ENCODE measurements at regions of chr16 and their contacts with region 1.

Region 1: DNA sequence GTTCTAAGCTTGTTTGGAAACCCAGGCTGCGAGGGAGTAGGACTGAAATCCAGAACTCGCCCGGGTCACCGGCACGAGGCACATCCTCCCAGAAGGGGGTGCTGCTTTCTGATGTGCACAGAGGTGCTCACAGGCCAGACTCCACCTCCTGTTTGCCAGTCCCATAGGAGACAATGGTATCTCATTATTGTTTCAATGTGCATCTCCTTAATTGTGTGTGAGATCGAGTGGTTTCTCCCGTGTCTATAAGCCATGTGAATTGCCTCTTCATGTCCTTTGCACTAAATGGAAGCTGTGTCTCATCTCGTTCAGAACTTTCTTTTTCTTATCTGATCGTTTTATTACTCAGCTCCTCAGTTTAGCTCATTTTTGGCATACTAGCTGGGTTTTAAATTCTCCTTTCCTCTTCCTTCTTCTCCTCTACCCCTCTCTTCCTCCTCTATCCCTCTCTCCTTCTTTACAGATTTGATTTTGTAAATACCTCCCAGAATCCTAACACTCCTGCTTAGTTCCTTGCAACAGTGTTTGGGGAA is 32.1 kb upstream of the PRKCB start:
- DNase-seq: peak; percentile 79 to 91 (median 85)
- ATAC-seq: peak; percentile 98
- H3K4me3 ChIP-seq: peak overlapping the region; percentile 9; the same call in 1 of the 2 replicates
- H3K27ac ChIP-seq: peak overlapping the region; percentile 58
- H3K4me1 ChIP-seq: peaks cover 3 to 22% of the 10 kb centered on the region in 2 experiments; a peak in 4 of 5 replicates
- H3K27me3 ChIP-seq: no peaks in the 10 kb centered on the region
- CTCF ChIP-seq: peak; percentile 89 to 93 (median 93)
- EP300 ChIP-seq: no peak; the same call in 1 of the 2 replicates
- POLR2A ChIP-seq: no peak
- RAD21 ChIP-seq: peak; percentile 82 to 95

Region 2: DNA sequence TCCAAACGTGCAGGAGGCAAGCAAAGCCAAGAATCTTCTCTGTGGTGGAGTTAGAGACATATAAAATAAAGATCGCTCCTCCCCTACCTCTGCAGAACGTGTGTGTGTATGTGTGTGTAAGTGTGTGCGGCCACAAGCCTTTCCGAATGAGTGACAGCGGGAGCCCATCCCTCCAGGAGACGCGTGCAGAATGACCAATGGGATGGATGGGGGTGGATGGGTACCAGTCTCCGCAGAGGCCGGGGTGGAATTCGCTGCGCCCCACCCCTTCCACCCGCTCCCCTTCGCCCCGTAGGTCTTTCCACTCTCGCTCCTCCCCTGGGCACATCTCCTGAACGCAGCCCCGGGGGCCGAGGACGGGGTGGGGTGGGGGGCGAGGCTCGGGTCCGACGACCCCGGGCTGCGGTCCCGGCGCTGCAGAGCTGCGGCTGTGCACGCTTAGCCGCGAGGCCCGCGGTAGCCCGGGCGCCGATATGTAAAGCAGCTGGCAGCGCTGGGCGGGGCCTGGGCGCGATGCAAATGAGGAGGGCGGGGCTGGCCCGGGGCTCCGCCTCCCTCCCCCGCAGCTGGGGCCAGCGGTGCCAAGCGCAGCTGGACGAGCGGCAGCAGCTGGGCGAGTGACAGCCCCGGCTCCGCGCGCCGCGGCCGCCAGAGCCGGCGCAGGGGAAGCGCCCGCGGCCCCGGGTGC is 31.9 kb after region 1 on chr16 and contains the start of gene PRKCB:
- CTCF ChIA-PET with region 1: interaction called, 8 read pairs
- POLR2A ChIA-PET with region 1: interaction called, 5 read pairs
- in situ Hi-C with region 1: no loop called
- intact Hi-C with region 1: loop called (anchors 2 kb)
- DNase-seq: peak; percentile 91 to 96 (median 96)
- ATAC-seq: peak; percentile 89
- H3K4me3 ChIP-seq: peak within 1 kb of the TSS; percentile 87
- H3K27ac ChIP-seq: peak within 1 kb of the TSS; percentile 64
- H3K4me1 ChIP-seq: peaks cover 34 to 51% of the 10 kb centered on the region in 2 experiments
- H3K27me3 ChIP-seq: no peaks in the 10 kb centered on the region
- CTCF ChIP-seq: no peak; a peak in 1 of 6 replicates
- EP300 ChIP-seq: no peak
- POLR2A ChIP-seq: peak; percentile 28; the same call in 1 of the 2 replicates
- RAD21 ChIP-seq: no peak
- polyA plus RNA-seq, gene PRKCB: 49.9 to 64.3 TPM

Region 3: DNA sequence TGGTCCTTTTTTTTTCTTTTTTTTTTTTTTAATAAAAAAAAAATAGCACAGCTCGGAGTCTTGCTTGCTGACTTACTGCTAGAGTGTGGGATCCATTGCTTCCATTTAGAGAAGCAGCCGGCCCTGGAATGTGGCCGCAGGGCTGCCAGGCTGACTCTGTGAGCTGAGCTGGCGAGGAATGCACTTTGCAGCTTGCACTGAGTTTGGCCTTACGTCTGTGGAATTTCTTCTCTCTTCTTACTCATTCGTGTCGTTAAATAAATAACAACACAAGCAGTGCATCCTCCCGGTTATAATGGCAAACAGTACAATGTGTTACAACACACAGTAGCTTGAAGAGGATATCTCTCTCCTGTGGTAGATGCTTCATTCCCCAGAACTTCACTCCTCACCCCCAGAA is 101.4 kb after region 1 on chr16:
- CTCF ChIA-PET with region 1: no interaction called
- POLR2A ChIA-PET with region 1: interaction called, 3 read pairs
- in situ Hi-C with region 1: no loop called
- intact Hi-C with region 1: loop called (anchors 5 kb)
- DNase-seq: no peak
- ATAC-seq: no peak
- H3K4me3 ChIP-seq: no peak overlapping the region
- H3K27ac ChIP-seq: peak overlapping the region; percentile 81
- H3K4me1 ChIP-seq: peaks cover 33 to 90% of the 10 kb centered on the region in 2 experiments
- H3K27me3 ChIP-seq: no peaks in the 10 kb centered on the region
- CTCF ChIP-seq: no peak
- EP300 ChIP-seq: no peak
- POLR2A ChIP-seq: no peak
- RAD21 ChIP-seq: no peak

Region 4: DNA sequence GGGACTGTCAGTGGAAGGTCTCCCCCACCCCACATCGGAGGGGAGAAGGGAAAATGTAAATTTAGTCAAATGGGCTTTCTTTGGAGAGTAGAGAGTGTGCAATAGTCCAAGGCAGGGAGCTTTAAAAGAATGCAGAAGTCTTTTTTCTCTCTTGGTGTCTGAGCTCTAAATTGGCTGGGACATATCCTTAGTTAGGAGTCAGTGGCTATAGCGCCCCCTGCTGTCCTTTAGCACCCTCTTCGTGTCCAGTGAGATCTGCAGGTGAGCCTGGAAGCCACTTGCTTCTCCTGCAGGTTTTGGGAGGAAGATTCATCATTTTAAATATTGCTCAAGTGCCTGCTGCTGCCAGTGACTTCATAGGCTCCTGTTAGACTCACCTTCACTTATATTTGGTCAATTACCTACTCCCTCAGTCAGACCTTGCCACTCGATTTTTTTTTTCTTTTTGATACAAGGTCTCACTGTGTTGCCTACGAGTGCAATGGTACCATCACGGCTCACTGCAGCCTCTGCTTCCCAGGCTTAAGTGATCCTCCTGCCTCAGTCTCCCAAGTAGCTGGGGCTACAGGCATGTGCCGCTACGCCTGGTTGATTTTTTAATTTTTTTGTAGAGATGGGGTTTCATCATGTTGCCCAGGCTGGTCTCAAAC is 206.9 kb after region 1 on chr16:
- CTCF ChIA-PET with region 1: interaction called, 36 read pairs
- POLR2A ChIA-PET with region 1: no interaction called
- in situ Hi-C with region 1: loop called (anchors 5 kb)
- intact Hi-C with region 1: loop called (anchors 1 kb)
- DNase-seq: peak; percentile 71 to 91 (median 76)
- ATAC-seq: peak; percentile 93
- H3K4me3 ChIP-seq: no peak overlapping the region
- H3K27ac ChIP-seq: no peak overlapping the region
- H3K4me1 ChIP-seq: peaks cover 4 to 12% of the 10 kb centered on the region in 2 experiments; a peak in 3 of 5 replicates
- H3K27me3 ChIP-seq: no peaks in the 10 kb centered on the region
- CTCF ChIP-seq: peak; percentile 83 to 85 (median 85)
- EP300 ChIP-seq: no peak
- POLR2A ChIP-seq: no peak
- RAD21 ChIP-seq: peak; percentile 87 to 89

Region 5: GRCh38 chr16:24504472-24505345 is 701.1 kb after region 1 on chr16:
- CTCF ChIA-PET with region 1: no interaction called
- POLR2A ChIA-PET with region 1: no interaction called
- in situ Hi-C with region 1: no loop called
- intact Hi-C with region 1: loop called (anchors 5 kb)
- DNase-seq: peak; percentile 70 to 80 (median 72)
- ATAC-seq: peak; percentile 98
- H3K4me3 ChIP-seq: no peak overlapping the region
- H3K27ac ChIP-seq: no peak overlapping the region
- H3K4me1 ChIP-seq: peaks cover 6 to 9% of the 10 kb centered on the region in 2 experiments; a peak in 3 of 5 replicates
- H3K27me3 ChIP-seq: peaks cover 3 to 16% of the 10 kb centered on the region in 2 experiments; a peak in 2 of 5 replicates
- CTCF ChIP-seq: peak; percentile 83 to 92 (median 86)
- EP300 ChIP-seq: no peak
- POLR2A ChIP-seq: no peak
- RAD21 ChIP-seq: peak; percentile 65 to 83

Measured in K562 (cell line).